ENCODE measurements at regions of chr3 and their contacts with region 1.

Region 1: DNA sequence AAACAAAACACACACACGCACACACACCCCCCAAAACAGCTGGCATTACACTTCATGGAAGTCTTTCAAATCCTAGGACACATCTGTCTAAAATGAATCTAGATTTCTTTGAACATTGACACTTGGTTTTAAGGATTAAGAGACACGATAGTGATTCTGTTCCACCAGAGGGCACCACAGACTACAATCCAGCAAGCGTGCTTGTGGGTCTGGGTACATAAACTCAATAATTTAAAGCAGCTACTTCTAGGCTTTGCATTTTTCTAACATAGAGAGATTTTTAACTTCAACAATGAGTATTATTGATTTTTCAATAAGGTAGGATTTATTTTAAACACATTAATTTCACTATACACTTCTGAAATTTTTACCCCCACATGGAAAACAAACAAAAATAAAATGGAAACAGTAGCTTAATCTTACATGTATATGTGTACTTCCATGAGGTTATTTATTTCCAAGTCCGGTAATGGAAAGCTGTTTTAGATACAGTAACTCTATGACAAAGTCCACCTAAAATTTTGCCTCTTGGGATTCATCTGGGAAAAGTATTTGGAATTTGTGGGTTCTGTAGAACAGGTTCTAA is 564.0 kb upstream of the TGFBR2 start:
- DNase-seq: peak; percentile 41 to 80
- ATAC-seq: peak; percentile 71 to 88; a peak in 5 of 6 replicates
- H3K4me3 ChIP-seq: no peak overlapping the region
- H3K27ac ChIP-seq: peak overlapping the region in 1 of 2 experiments; percentile 67; a peak in 3 of 6 replicates
- H3K4me1 ChIP-seq: peaks cover 8% of the 10 kb centered on the region; the same call in 2 of the 3 replicates
- CTCF ChIP-seq: peak; percentile 90
- EP300 ChIP-seq: no peak
- POLR2A ChIP-seq: no peak
- RAD21 ChIP-seq: peak; percentile 96

Region 2: DNA sequence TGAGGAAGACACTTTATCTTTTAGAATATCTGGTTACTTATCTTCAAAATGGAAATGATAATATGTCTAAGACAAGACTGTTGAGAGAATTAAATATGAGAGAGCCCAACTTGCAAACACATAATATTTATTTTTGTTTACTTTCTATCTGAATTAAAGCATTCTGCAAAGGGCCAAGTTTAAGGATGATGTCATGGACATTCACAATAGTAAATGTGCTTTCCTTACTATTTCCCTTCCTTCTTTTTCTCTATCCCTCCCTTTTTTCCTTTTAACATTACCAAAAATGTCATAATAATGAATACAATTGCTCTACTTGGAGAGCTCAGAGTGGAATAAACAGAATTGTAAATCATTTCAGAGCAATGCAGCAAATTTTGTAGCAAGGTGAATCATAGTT is 11.6 kb before region 1 on chr3:
- CTCF ChIA-PET with region 1: interaction called, 29 read pairs
- POLR2A ChIA-PET with region 1: no interaction called
- DNase-seq: no peak
- ATAC-seq: no peak
- H3K4me3 ChIP-seq: no peak overlapping the region
- H3K27ac ChIP-seq: no peak overlapping the region
- H3K4me1 ChIP-seq: no peaks in the 10 kb centered on the region
- CTCF ChIP-seq: no peak
- EP300 ChIP-seq: no peak
- POLR2A ChIP-seq: no peak
- RAD21 ChIP-seq: no peak

Region 3: GRCh38 chr3:30112902-30113484 is 70.6 kb after region 1 on chr3:
- CTCF ChIA-PET with region 1: interaction called, 11 read pairs
- POLR2A ChIA-PET with region 1: no interaction called
- DNase-seq: peak; percentile 6 to 54
- ATAC-seq: peak; percentile 59 to 65; a peak in 3 of 6 replicates
- H3K4me3 ChIP-seq: no peak overlapping the region
- H3K27ac ChIP-seq: peak overlapping the region; percentile 54 to 71
- H3K4me1 ChIP-seq: peaks cover 9% of the 10 kb centered on the region; the same call in 1 of the 3 replicates
- CTCF ChIP-seq: peak; percentile 81
- EP300 ChIP-seq: no peak
- POLR2A ChIP-seq: no peak
- RAD21 ChIP-seq: peak; percentile 86 to 96

Region 4: GRCh38 chr3:30199096-30199759 is 156.9 kb after region 1 on chr3:
- CTCF ChIA-PET with region 1: interaction called, 34 read pairs
- POLR2A ChIA-PET with region 1: no interaction called
- DNase-seq: peak; percentile 15 to 58
- ATAC-seq: peak in 1 of 2 experiments; percentile 66; a peak in 2 of 6 replicates
- H3K4me3 ChIP-seq: no peak overlapping the region
- H3K27ac ChIP-seq: peak overlapping the region; percentile 4 to 59; a peak in 4 of 6 replicates
- H3K4me1 ChIP-seq: peaks cover 9% of the 10 kb centered on the region
- CTCF ChIP-seq: peak; percentile 74
- EP300 ChIP-seq: no peak
- POLR2A ChIP-seq: no peak
- RAD21 ChIP-seq: peak; percentile 80 to 82

Region 5: GRCh38 chr3:30693470-30694120 is 651.2 kb after region 1 on chr3:
- CTCF ChIA-PET with region 1: interaction called, 54 read pairs
- POLR2A ChIA-PET with region 1: no interaction called
- DNase-seq: peak; percentile 63 to 77
- ATAC-seq: peak; percentile 91 to 92
- H3K4me3 ChIP-seq: no peak overlapping the region
- H3K27ac ChIP-seq: peak overlapping the region; percentile 59 to 77
- H3K4me1 ChIP-seq: peaks cover 42% of the 10 kb centered on the region
- CTCF ChIP-seq: peak; percentile 95
- EP300 ChIP-seq: no peak
- POLR2A ChIP-seq: no peak
- RAD21 ChIP-seq: peak; percentile 99

Region 6: GRCh38 chr3:30708472-30708871 is 666.1 kb after region 1 on chr3:
- CTCF ChIA-PET with region 1: interaction called, 12 read pairs
- POLR2A ChIA-PET with region 1: no interaction called
- DNase-seq: no peak
- ATAC-seq: no peak
- H3K4me3 ChIP-seq: no peak overlapping the region
- H3K27ac ChIP-seq: no peak overlapping the region
- H3K4me1 ChIP-seq: no peaks in the 10 kb centered on the region
- CTCF ChIP-seq: no peak
- EP300 ChIP-seq: no peak
- POLR2A ChIP-seq: no peak
- RAD21 ChIP-seq: no peak

Region 7: GRCh38 chr3:30751610-30752299 is 709.4 kb after region 1 on chr3:
- CTCF ChIA-PET with region 1: interaction called, 15 read pairs
- POLR2A ChIA-PET with region 1: no interaction called
- DNase-seq: peak in 1 of 2 experiments; percentile 36
- ATAC-seq: peak in 1 of 2 experiments; percentile 66; a peak in 3 of 6 replicates
- H3K4me3 ChIP-seq: no peak overlapping the region
- H3K27ac ChIP-seq: peak overlapping the region; percentile 52 to 69; a peak in 5 of 6 replicates
- H3K4me1 ChIP-seq: peaks cover 46% of the 10 kb centered on the region
- CTCF ChIP-seq: peak; percentile 49
- EP300 ChIP-seq: no peak
- POLR2A ChIP-seq: no peak
- RAD21 ChIP-seq: peak; percentile 65 to 80